ENCODE measurements at regions of chr11 and their contacts with region 1.

Region 1: GRCh38 chr11:60970369-60970774 is 1.1 kb upstream of the CD6 start:
- DNase-seq: peak; percentile 66 to 85 (median 80)
- ATAC-seq: peak; percentile 83
- H3K4me3 ChIP-seq: peak overlapping the region; percentile 83
- H3K4me3 Mint-ChIP-seq: peak overlapping the region; percentile 92 to 98 (median 96)
- H3K27ac ChIP-seq: peak overlapping the region; percentile 96
- H3K27ac Mint-ChIP-seq: peak overlapping the region; percentile 39 to 99 (median 95)
- H3K4me1 ChIP-seq: peaks cover 13 to 17% of the 10 kb centered on the region in 2 donors
- H3K4me1 Mint-ChIP-seq: peaks cover 14 to 29% (median 20%) of the 10 kb centered on the region in 7 donors
- H3K27me3 ChIP-seq: no peaks in the 10 kb centered on the region
- H3K27me3 Mint-ChIP-seq: peaks cover 0 to 11% (median 0%) of the 10 kb centered on the region in 5 donors

Region 2: GRCh38 chr11:60913793-60914632 is 56.4 kb before region 1 on chr11 and contains the start of gene TMEM109:
- CTCF ChIA-PET with region 1: interaction called, 6 read pairs
- POLR2A ChIA-PET with region 1: no interaction called
- intact Hi-C with region 1: loop called (anchors 1 kb)
- DNase-seq: peak; percentile 77 to 93 (median 91)
- ATAC-seq: peak; percentile 76
- H3K4me3 ChIP-seq: peak within 1 kb of the TSS; percentile 94
- H3K4me3 Mint-ChIP-seq: peak within 1 kb of the TSS; percentile 91 to 99 (median 98)
- H3K27ac ChIP-seq: peak within 1 kb of the TSS; percentile 94
- H3K27ac Mint-ChIP-seq: peak within 1 kb of the TSS; percentile 91 to 99 (median 97)
- H3K4me1 ChIP-seq: peaks cover 43 to 45% of the 10 kb centered on the region in 2 donors
- H3K4me1 Mint-ChIP-seq: peaks cover 39 to 77% (median 60%) of the 10 kb centered on the region in 7 donors
- H3K27me3 ChIP-seq: no peaks in the 10 kb centered on the region
- H3K27me3 Mint-ChIP-seq: peaks cover 0 to 11% (median 0%) of the 10 kb centered on the region in 5 donors
- total RNA-seq, gene TMEM109: 49.8 to 99.8 (median 56.9) TPM

Region 3: DNA sequence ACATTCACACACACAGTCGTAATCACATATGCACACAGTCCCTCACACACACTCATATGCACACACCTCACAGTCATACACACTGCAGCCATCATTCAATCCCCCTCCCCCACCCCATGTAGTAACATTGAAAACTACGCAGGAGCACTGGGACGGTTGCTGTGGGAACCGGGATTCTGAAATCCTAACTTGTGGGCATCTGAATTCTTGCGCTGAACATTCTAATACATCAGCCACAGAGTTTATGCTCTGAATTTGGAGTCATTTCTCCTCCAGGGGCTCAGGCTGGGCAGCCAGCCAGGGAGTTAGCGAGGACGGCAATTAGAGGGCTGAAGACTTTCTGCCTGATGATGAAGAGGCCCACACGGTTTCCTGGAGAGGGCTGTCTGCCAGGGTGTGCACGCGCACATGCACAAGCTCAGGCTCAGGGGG is 33.8 kb after region 1 on chr11:
- CTCF ChIA-PET with region 1: interaction called, 12 read pairs
- POLR2A ChIA-PET with region 1: no interaction called
- intact Hi-C with region 1: loop called (anchors 1 kb)
- DNase-seq: peak in 5 of 9 donors; percentile 53 to 64 (median 54)
- ATAC-seq: peak; percentile 59
- H3K4me3 ChIP-seq: peak overlapping the region; percentile 14
- H3K4me3 Mint-ChIP-seq: peak overlapping the region; percentile 79 to 87 (median 82)
- H3K27ac ChIP-seq: peak overlapping the region; percentile 65
- H3K27ac Mint-ChIP-seq: peak overlapping the region; percentile 84 to 97 (median 95)
- H3K4me1 ChIP-seq: peaks cover 16 to 70% of the 10 kb centered on the region in 2 donors
- H3K4me1 Mint-ChIP-seq: peaks cover 59 to 90% (median 77%) of the 10 kb centered on the region in 7 donors
- H3K27me3 ChIP-seq: no peaks in the 10 kb centered on the region
- H3K27me3 Mint-ChIP-seq: no peaks in the 10 kb centered on the region

Region 4: DNA sequence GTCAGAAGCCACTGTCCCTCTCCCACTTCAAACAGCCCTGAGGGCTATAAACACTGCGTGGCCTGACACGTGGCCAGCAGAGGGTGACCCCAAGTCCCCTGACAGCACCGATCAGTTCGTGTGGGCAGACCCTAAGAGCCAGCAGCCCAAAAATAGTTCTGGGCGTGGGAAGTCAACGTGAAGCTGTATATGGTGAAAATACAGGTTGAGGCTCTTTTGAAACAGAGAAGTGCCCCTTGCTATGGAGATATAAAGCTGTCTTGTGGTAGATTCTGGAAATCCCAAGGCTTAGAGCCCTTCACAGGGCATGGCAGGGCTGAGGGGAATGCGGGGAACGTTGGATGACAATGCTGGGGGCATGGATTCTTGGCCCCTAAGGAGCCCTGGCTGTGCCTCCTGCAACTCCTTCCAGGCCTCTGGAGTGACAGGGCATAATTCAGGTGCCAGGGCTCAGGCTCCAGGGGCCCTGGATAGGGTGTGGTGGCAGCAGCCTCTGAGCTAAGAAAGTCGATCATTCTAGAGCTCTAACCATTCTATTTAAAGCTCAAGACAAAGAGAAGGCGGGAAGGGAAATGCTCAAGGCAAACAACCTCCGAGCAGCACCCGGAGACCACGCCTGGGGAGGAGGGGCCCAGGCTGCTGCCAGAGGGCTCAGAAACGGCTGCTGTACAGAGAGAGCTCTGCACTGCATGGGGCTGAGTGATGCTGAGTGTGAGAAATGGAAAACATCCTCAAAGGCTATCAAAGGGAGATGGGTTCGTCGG is 71.6 kb after region 1 on chr11:
- CTCF ChIA-PET with region 1: interaction called, 13 read pairs
- POLR2A ChIA-PET with region 1: no interaction called
- intact Hi-C with region 1: loop called (anchors 1 kb)
- DNase-seq: peak; percentile 60 to 97 (median 96)
- ATAC-seq: peak; percentile 98
- H3K4me3 ChIP-seq: peak overlapping the region; percentile 20
- H3K4me3 Mint-ChIP-seq: peak overlapping the region; percentile 70 to 85 (median 76)
- H3K27ac ChIP-seq: peak overlapping the region; percentile 81
- H3K27ac Mint-ChIP-seq: peak overlapping the region; percentile 96 to 100 (median 98)
- H3K4me1 ChIP-seq: peaks cover 22 to 49% of the 10 kb centered on the region in 2 donors
- H3K4me1 Mint-ChIP-seq: peaks cover 40 to 70% (median 59%) of the 10 kb centered on the region in 7 donors
- H3K27me3 ChIP-seq: no peaks in the 10 kb centered on the region
- H3K27me3 Mint-ChIP-seq: no peaks in the 10 kb centered on the region

Region 5: GRCh38 chr11:61120706-61121191 is 150.4 kb after region 1 on chr11:
- CTCF ChIA-PET with region 1: interaction called, 4 read pairs
- POLR2A ChIA-PET with region 1: interaction called, 4 read pairs
- intact Hi-C with region 1: loop called in 1 of 2 experiments (anchors 2 kb)
- DNase-seq: peak in 7 of 9 donors; percentile 81 to 92 (median 88)
- ATAC-seq: peak; percentile 93
- H3K4me3 ChIP-seq: peak overlapping the region; percentile 21
- H3K4me3 Mint-ChIP-seq: peak overlapping the region in 9 of 10 donors; percentile 73 to 85 (median 82)
- H3K27ac ChIP-seq: peak overlapping the region; percentile 79
- H3K27ac Mint-ChIP-seq: peak overlapping the region; percentile 77 to 100 (median 99)
- H3K4me1 ChIP-seq: peaks cover 15 to 45% of the 10 kb centered on the region in 2 donors
- H3K4me1 Mint-ChIP-seq: peaks cover 40 to 77% (median 64%) of the 10 kb centered on the region in 7 donors
- H3K27me3 ChIP-seq: no peaks in the 10 kb centered on the region
- H3K27me3 Mint-ChIP-seq: no peaks in the 10 kb centered on the region

Region 6: GRCh38 chr11:61187505-61188130 is 217.2 kb after region 1 on chr11:
- CTCF ChIA-PET with region 1: interaction called, 3 read pairs
- POLR2A ChIA-PET with region 1: interaction called, 5 read pairs
- intact Hi-C with region 1: loop called (anchors 1 kb)
- DNase-seq: peak; percentile 48 to 76 (median 72)
- ATAC-seq: peak; percentile 96
- H3K4me3 ChIP-seq: no peak overlapping the region
- H3K4me3 Mint-ChIP-seq: no peak overlapping the region
- H3K27ac ChIP-seq: no peak overlapping the region
- H3K27ac Mint-ChIP-seq: peak overlapping the region in 1 of 9 donors; percentile 25
- H3K4me1 ChIP-seq: no peaks in the 10 kb centered on the region
- H3K4me1 Mint-ChIP-seq: peaks cover 0 to 5% (median 0%) of the 10 kb centered on the region in 7 donors
- H3K27me3 ChIP-seq: no peaks in the 10 kb centered on the region
- H3K27me3 Mint-ChIP-seq: peaks cover 0 to 13% (median 4%) of the 10 kb centered on the region in 5 donors